Activated CD4-positive, alpha-beta T cell treated with anti-CD3 and anti-CD28 coated beads for 36 hours (primary cell): ENCODE measurements at regions of chr14 and their contacts with region 1.

Region 1: DNA sequence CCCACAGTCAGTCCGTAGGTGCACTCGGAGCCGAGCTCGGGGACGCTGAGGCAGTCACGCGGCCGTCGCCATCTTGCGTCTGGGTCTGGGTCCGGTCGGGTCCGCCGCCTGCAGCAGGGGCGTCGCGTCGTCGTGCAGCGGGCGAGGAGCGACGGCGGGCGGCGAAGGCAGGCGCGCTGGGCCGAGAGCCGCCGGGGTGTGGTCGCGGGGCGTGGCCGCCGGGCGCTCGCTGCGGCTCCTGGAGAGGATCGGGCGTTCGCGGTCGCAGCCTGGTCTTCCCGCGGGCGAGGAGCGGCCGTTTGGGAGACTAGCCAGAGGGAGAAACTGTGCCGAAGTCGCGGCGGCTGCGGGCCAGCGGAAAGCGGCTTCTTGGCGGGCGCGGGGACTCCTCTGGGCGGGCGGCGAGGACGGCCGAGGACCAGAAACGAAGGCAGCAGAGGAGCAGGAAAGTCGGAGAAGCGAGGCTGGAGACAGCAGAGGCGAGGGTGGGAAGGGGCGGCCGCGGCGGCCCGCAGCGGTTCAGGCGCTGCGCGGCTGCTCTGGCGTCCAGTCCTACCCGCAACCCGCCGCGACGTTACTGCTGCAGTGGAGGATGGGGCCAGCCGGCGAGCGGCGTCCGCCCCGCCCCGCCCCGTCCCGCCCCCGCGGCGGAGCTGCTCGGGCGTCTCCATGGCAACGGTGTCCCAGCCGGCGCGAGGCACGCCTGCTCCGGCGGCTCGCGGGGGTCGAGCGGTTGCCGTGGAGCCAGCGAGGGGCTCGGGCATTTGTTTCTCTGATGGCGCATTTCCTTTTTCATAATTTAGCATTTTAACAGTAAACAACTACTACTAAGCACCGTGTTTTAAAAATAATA is at the start of gene PNMA1:
- DNase-seq: peak; percentile 92
- ATAC-seq: peak; percentile 79
- H3K4me3 Mint-ChIP-seq: peak within 1 kb of the TSS; percentile 98
- H3K27ac Mint-ChIP-seq: peak within 1 kb of the TSS; percentile 94
- H3K4me1 Mint-ChIP-seq: peaks cover 13% of the 10 kb centered on the region
- H3K27me3 Mint-ChIP-seq: no peaks in the 10 kb centered on the region
- total RNA-seq, gene PNMA1: 23.2 to 28.8 TPM

Region 2: GRCh38 chr14:73655851-73656250 is 58.2 kb before region 1 on chr14:
- CTCF ChIA-PET with region 1: no interaction called
- POLR2A ChIA-PET with region 1: no interaction called
- intact Hi-C with region 1: loop called in 1 of 2 experiments (anchors 2 kb)
- DNase-seq: no peak
- ATAC-seq: no peak
- H3K4me3 Mint-ChIP-seq: no peak overlapping the region
- H3K27ac Mint-ChIP-seq: no peak overlapping the region
- H3K4me1 Mint-ChIP-seq: no peaks in the 10 kb centered on the region
- H3K27me3 Mint-ChIP-seq: no peaks in the 10 kb centered on the region

Region 3: DNA sequence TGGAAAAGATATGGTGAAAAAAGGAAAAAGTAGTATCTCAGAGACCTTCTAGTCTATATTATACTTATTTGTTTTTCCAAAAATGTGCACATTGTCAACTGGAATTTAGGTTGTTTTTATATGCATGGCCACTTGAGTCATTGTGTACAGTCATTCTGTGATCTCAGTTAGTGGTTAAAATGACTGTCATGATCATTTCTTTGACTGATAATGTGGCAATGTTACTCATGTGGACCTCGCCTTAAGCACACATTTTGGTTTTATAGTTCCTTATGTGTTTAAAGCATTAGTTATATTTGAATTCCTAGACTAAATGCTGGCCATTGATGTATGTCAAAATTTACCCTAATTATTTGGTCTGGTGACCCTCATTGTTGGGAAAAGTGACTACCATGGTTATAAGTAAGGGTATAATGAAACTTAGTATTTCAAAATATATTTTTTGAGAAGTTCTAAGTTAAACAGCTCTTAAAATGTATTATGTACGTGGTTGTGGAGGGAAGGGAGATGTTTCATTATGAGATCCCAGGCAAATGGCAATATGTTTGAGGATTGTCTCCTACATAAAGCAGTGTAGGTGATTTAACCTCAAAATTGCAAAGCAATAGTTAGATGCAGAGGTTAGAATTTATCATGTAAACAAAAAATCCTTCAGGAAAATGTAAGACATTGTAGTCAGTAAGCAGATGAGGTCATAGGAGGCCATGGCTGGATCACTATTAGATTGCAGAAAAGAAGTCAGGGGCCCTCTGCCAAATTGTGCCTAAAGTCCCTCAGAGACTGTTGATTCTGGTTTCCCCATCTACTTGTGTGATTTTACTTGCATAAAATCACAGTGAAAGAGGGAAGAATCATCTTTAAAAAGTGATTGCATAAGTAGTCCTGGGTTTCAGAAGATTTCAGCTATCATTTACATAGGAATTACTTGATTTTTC is 17.3 kb before region 1 on chr14:
- CTCF ChIA-PET with region 1: interaction called, 4 read pairs
- POLR2A ChIA-PET with region 1: no interaction called
- intact Hi-C with region 1: loop called (anchors 1 kb)
- DNase-seq: no peak
- ATAC-seq: peak; percentile 87
- H3K4me3 Mint-ChIP-seq: peak overlapping the region; percentile 46
- H3K27ac Mint-ChIP-seq: peak overlapping the region; percentile 92
- H3K4me1 Mint-ChIP-seq: peaks cover 50% of the 10 kb centered on the region
- H3K27me3 Mint-ChIP-seq: no peaks in the 10 kb centered on the region

Region 4: GRCh38 chr14:74018586-74019407 is 304.8 kb after region 1 on chr14 and contains the starts of genes BBOF1 and ENTPD5:
- CTCF ChIA-PET with region 1: no interaction called
- POLR2A ChIA-PET with region 1: no interaction called
- intact Hi-C with region 1: loop called (anchors 1 to 10 kb)
- DNase-seq: peak; percentile 90
- ATAC-seq: peak; percentile 93
- H3K4me3 Mint-ChIP-seq: peak within 1 kb of the TSS; percentile 80
- H3K27ac Mint-ChIP-seq: peak within 1 kb of the TSS; percentile 93
- H3K4me1 Mint-ChIP-seq: peaks cover 12% of the 10 kb centered on the region
- H3K27me3 Mint-ChIP-seq: no peaks in the 10 kb centered on the region
- total RNA-seq, gene BBOF1: 1.9 to 2.1 TPM
- total RNA-seq, gene ENTPD5: 8.7 to 10.0 TPM